HCT116 (cell line): ENCODE measurements at regions of chr17 and their contacts with region 1.

Region 1: GRCh38 chr17:16304830-16305229 is 48.4 kb downstream of the CENPV start:
- DNase-seq: no peak
- ATAC-seq: peak; percentile 86
- H3K4me3 ChIP-seq: no peak overlapping the region
- H3K27ac ChIP-seq: no peak overlapping the region
- H3K4me1 ChIP-seq: peaks cover 7 to 14% of the 10 kb centered on the region in 2 experiments
- H3K27me3 ChIP-seq: no peaks in the 10 kb centered on the region
- CTCF ChIP-seq: peak; percentile 32 to 56 (median 51); a peak in 5 of 6 replicates
- POLR2A ChIP-seq: no peak
- RAD21 ChIP-seq: peak; percentile 62

Region 2: DNA sequence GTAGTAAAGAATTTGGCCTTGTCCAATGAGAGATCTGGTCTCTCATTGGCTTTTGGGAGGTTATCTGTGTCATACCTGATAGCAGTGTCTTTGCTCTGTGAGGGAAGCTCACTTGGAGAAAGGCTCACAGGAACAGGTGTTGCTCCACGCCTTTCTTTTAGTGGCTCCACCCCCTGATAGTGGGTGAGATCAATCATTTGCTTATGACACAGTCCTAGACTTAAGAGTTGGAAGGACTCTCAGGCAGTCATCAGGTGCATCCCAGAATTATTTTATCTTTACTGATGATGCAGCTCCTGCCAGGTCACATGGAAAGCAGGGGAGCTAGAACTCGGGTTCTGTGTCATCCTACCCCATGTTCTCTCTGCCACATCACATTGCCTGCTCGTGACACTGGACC is 10.9 kb before region 1 on chr17:
- CTCF ChIA-PET with region 1: interaction called, 13 read pairs
- POLR2A ChIA-PET with region 1: interaction called, 3 read pairs
- RAD21 ChIA-PET with region 1: no interaction called
- intact Hi-C with region 1: no loop called
- DNase-seq: no peak
- ATAC-seq: 0 out of 2 replicates have a peak, but pooled peaks have one; percentile 24
- H3K4me3 ChIP-seq: no peak overlapping the region
- H3K27ac ChIP-seq: no peak overlapping the region
- H3K4me1 ChIP-seq: peaks cover 54 to 55% of the 10 kb centered on the region in 2 experiments
- H3K27me3 ChIP-seq: no peaks in the 10 kb centered on the region
- CTCF ChIP-seq: no peak
- POLR2A ChIP-seq: no peak
- RAD21 ChIP-seq: no peak